Activated T-helper 1 cell treated with anti-CD3 and anti-CD28 coated beads, Interleukin-12 subunit alpha, Interleukin-12 subunit beta, Interleukin-2, Interleukin-4 antibody, amounts not matched to agents 30 ng/mL and 10 ng/mL and 1 ng/mL, durations not matched to agents 14 hours and 24 hours and 36 hours (primary cell): ENCODE measurements at regions of chr4 and their contacts with region 1.

Region 1: GRCh38 chr4:110211007-110211769 is 12.8 kb upstream of the ELOVL6 start:
- DNase-seq: no peak
- H3K4me3 Mint-ChIP-seq: no peak overlapping the region
- H3K27ac Mint-ChIP-seq: no peak overlapping the region
- H3K4me1 Mint-ChIP-seq: peaks cover 11% of the 10 kb centered on the region
- H3K27me3 Mint-ChIP-seq: peaks cover 4% of the 10 kb centered on the region

Region 2: DNA sequence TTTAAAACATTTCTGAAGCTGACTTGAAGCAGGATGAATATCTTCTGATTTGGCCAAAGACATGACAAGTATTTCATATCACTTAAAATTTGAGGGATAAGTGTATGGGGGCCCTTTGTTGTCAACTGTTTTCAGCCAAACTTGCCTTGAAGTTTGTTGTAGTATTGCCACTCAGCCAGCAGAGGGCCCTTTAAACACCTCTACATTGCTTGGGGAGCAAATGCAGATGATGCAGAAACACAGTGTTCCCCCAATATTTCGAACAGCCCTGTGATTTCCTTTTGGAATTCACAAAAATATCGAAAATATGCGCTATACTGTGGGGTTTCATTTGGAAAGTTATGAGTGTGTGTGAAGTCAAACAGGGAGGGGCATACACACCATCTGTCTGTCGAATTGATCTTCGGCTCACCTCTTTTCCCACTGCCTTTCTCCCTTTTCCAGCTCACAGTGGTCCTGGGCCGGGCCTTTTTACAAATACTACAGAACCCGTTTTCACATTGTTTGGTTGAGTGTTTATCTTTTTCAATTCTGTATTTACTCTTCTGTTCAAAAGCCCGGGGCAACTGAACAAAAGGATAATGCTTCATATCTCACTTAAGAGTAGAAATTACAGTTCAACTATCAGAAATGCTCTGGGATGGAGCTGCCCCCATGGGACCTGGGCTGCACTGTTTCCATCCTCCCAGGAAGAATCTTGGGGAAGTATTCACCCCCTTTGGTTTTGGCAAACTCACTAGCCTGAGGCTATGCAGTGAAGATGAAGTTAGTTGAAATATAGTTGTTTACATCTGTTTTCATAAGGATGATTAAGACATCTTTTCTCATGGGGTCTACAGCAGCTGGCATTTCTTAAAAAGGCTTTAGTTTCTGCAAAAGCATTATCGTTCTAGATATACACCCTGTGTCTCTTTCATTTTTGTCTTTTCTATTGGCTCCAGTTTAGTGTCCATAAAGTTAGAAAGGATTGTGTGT is 160.9 kb before region 1 on chr4:
- intact Hi-C with region 1: loop called (anchors 1 kb)
- DNase-seq: peak; percentile 27
- H3K4me3 Mint-ChIP-seq: no peak overlapping the region
- H3K27ac Mint-ChIP-seq: no peak overlapping the region
- H3K4me1 Mint-ChIP-seq: peaks cover 52% of the 10 kb centered on the region
- H3K27me3 Mint-ChIP-seq: no peaks in the 10 kb centered on the region

Region 3: GRCh38 chr4:110275871-110276270 is 64.7 kb after region 1 on chr4:
- intact Hi-C with region 1: no loop called
- DNase-seq: no peak
- H3K4me3 Mint-ChIP-seq: no peak overlapping the region
- H3K27ac Mint-ChIP-seq: no peak overlapping the region
- H3K4me1 Mint-ChIP-seq: no peaks in the 10 kb centered on the region
- H3K27me3 Mint-ChIP-seq: peaks cover 22% of the 10 kb centered on the region